ENCODE measurements at regions of chr1 and their contacts with region 1.

Region 1: DNA sequence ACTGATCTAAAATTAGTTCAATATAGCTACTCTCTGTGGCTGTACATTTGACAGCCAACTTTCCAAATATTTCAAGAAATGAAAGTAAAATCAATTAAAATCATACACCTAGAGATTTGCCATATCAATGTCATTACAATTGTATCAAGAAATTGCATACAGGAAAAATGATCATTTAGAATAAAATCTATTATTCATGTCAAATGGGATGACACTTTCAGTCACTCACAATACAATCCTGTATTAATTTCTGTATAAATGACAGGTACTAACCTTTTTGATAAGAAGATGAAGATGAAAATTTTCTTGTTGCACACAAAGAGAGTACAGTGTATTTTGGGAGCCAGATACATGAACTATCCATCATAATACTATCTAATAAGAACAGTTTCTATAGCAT is 1588.9 kb upstream of the PRMT6 start:
- H3K4me3 Mint-ChIP-seq: no peak overlapping the region
- H3K27ac Mint-ChIP-seq: no peak overlapping the region
- H3K4me1 Mint-ChIP-seq: no peaks in the 10 kb centered on the region
- H3K27me3 Mint-ChIP-seq: no peaks in the 10 kb centered on the region

Region 2: GRCh38 chr1:104973516-104973915 is 494.0 kb before region 1 on chr1:
- intact Hi-C with region 1: no loop called
- H3K4me3 Mint-ChIP-seq: no peak overlapping the region
- H3K27ac Mint-ChIP-seq: no peak overlapping the region
- H3K4me1 Mint-ChIP-seq: no peaks in the 10 kb centered on the region
- H3K27me3 Mint-ChIP-seq: no peaks in the 10 kb centered on the region

Region 3: GRCh38 chr1:105485207-105485606 is 17.7 kb after region 1 on chr1:
- intact Hi-C with region 1: loop called (anchors 1 kb)
- H3K4me3 Mint-ChIP-seq: no peak overlapping the region
- H3K27ac Mint-ChIP-seq: no peak overlapping the region
- H3K4me1 Mint-ChIP-seq: no peaks in the 10 kb centered on the region
- H3K27me3 Mint-ChIP-seq: no peaks in the 10 kb centered on the region

Measured in dendritic cell treated with granulocyte-macrophage colony-stimulating factor and Interleukin-4, amounts not matched to agents 40 ng/mL and 50 ng/mL, for 4 days (primary cell).